Activated CD4-positive, alpha-beta T cell treated with anti-CD3 and anti-CD28 coated beads, Interleukin-2, amount 10 ng/mL, durations not matched to agents 24 days and 14 days (primary cell): ENCODE measurements at regions of chr20 and their contacts with region 1.

Region 1: GRCh38 chr20:10427060-10427692 is 6.8 kb downstream of the MKKS start:
- DNase-seq: peak; percentile 79
- H3K4me3 Mint-ChIP-seq: no peak overlapping the region
- H3K27ac Mint-ChIP-seq: no peak overlapping the region
- H3K4me1 Mint-ChIP-seq: peaks cover 21% of the 10 kb centered on the region
- H3K27me3 Mint-ChIP-seq: no peaks in the 10 kb centered on the region

Region 2: DNA sequence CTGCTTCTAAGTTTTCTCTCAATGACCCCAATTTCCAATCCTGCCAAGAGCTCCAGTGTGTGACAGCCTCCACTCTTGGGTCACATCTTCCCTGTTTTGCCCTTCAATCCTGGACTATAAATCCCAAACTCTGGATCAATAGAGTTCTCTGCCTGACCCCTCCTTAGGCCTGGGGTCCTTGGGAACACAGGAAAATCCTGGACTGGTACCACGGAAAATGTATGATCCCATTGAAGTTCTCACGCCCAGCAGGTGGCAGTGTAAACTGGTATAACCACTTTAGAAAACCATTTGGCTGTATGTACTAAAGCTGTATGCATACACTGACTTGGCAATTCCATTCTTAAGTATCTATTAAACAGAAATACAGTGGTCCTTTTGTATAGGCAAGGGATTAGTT is 110.6 kb before region 1 on chr20:
- intact Hi-C with region 1: loop called (anchors 10 kb)
- DNase-seq: peak; percentile 61
- H3K4me3 Mint-ChIP-seq: no peak overlapping the region
- H3K27ac Mint-ChIP-seq: no peak overlapping the region
- H3K4me1 Mint-ChIP-seq: peaks cover 3% of the 10 kb centered on the region
- H3K27me3 Mint-ChIP-seq: no peaks in the 10 kb centered on the region

Region 3: GRCh38 chr20:10369723-10370090 is 57.5 kb before region 1 on chr20:
- intact Hi-C with region 1: no loop called
- DNase-seq: no peak
- H3K4me3 Mint-ChIP-seq: no peak overlapping the region
- H3K27ac Mint-ChIP-seq: no peak overlapping the region
- H3K4me1 Mint-ChIP-seq: peaks cover 3% of the 10 kb centered on the region
- H3K27me3 Mint-ChIP-seq: peaks cover 20% of the 10 kb centered on the region

Region 4: DNA sequence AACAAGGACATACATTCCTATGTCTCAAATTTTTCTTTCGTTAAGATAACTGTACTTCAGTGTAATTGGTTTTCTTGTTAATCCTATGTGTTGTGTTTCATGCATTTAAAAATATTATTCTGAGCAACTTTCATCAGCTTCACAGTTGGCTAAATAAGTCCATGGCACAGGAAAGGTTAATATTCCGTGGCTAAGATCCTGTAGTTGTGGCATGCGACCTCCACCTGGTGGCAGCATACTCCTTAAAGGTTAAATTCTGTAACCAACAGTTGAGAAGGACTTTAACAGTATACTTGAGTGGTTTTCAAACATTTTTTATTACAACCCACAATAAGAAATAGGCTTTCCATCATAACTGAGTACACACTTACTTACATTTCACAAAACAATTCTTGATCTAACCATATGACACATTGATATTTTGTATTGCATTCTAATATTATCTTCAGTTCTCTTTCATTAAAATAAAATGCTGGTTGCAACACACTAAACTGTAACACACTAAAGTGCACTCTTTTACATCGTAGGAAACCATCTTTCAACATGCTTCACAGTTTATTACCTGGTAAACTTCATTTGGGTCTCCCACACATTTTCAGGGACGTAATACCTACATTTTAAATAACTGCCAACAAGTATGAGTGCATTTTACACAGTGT is 126.3 kb after region 1 on chr20:
- intact Hi-C with region 1: no loop called
- DNase-seq: peak; percentile 83
- H3K4me3 Mint-ChIP-seq: no peak overlapping the region
- H3K27ac Mint-ChIP-seq: no peak overlapping the region
- H3K4me1 Mint-ChIP-seq: peaks cover 28% of the 10 kb centered on the region
- H3K27me3 Mint-ChIP-seq: no peaks in the 10 kb centered on the region